ENCODE measurements at regions of chr1 and their contacts with region 1.

Region 1: DNA sequence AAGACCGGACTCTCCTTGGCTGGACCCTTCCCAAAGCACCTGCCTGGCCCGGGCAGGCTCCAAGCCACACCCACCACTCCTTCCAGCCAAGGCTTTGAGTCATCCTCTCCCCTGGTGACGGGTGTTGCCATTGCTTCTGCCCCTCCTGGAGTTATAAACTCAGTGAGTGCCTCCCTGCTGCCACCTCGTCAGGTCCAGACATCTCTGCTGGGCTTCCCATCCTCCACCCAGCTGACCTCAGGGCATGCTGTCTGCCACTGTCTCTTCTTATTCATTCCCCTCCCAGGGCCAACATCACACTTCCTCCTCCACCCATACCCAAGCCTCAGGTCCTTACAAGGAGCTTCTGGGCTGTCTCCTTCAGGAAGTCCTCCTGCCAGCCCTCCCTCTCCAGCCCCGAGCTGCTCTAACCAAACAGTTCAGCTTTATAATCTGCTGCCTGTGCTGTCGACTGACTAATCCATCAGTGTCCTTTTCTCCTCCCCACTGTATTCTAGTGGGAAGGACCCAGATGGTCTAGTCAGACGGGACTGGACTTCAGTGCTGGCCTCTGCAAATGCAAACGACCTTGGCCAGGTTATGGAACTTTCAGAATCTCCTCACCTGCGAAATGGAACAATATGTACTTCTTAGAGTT is 1.8 kb upstream of the CLSTN1 start:
- DNase-seq: peak; percentile 59 to 67
- H3K4me3 ChIP-seq: peak overlapping the region in 2 of 4 experiments; percentile 68 to 86; a peak in 5 of 8 replicates
- H3K27ac ChIP-seq: no peak overlapping the region
- H3K4me1 ChIP-seq: peaks cover 4 to 18% (median 12%) of the 10 kb centered on the region in 4 experiments
- H3K27me3 ChIP-seq: peaks cover 0 to 15% (median 14%) of the 10 kb centered on the region in 4 experiments; a peak in 6 of 7 replicates
- CTCF ChIP-seq: no peak
- EP300 ChIP-seq: no peak
- POLR2A ChIP-seq: no peak
- RAD21 ChIP-seq: no peak

Region 2: DNA sequence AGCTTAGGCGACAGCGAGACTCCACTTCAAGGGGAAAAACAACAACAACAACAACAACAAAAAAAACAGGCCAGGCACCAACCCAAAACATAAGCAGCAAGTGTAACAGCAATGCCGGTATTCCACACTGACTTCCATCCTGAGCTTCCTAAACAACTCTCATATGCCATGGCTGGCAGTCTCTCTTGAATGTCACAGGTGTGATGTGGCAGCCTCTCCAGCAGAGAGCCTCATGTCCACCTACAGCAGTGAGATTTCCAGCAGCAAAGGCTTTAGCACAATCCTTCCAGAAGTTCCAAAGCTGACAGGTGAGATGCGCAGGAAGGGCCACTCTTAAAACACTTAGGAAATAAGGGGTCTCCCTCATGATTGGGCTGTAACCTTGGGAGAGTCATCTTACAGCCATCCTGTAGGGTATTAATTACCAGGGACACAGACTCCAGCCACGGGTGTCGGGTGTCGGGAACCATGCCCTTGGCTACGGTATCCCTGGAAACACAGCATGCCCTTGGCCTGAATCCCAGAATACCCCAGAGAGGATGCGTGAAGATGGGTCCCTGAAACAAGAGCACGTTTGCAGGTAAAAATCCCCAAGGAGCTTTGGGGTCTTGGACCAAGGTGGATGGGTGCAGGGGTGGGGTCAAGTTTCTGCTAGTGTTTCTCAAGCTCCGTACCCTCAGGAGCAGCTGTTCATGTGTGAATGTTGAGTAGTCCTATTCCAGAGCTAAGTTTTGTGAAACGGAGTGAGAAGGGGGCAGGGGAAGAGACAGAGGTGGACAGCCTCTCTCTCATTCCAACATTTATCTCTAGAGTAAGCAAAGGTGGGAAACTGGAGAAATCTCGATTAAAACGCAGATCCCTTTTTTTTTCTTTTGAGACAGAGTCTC is 33.2 kb before region 1 on chr1:
- CTCF ChIA-PET with region 1: interaction called, 66 read pairs
- POLR2A ChIA-PET with region 1: interaction called, 4 read pairs
- DNase-seq: peak in 1 of 2 experiments; percentile 72
- H3K4me3 ChIP-seq: no peak overlapping the region
- H3K27ac ChIP-seq: no peak overlapping the region
- H3K4me1 ChIP-seq: peaks cover 3 to 23% (median 11%) of the 10 kb centered on the region in 4 experiments
- H3K27me3 ChIP-seq: no peaks in the 10 kb centered on the region
- CTCF ChIP-seq: peak; percentile 2 to 37 (median 5); a peak in 2 of 4 replicates
- EP300 ChIP-seq: no peak
- POLR2A ChIP-seq: no peak
- RAD21 ChIP-seq: peak in 1 of 2 experiments; percentile 27; a peak in 1 of 4 replicates

Region 3: DNA sequence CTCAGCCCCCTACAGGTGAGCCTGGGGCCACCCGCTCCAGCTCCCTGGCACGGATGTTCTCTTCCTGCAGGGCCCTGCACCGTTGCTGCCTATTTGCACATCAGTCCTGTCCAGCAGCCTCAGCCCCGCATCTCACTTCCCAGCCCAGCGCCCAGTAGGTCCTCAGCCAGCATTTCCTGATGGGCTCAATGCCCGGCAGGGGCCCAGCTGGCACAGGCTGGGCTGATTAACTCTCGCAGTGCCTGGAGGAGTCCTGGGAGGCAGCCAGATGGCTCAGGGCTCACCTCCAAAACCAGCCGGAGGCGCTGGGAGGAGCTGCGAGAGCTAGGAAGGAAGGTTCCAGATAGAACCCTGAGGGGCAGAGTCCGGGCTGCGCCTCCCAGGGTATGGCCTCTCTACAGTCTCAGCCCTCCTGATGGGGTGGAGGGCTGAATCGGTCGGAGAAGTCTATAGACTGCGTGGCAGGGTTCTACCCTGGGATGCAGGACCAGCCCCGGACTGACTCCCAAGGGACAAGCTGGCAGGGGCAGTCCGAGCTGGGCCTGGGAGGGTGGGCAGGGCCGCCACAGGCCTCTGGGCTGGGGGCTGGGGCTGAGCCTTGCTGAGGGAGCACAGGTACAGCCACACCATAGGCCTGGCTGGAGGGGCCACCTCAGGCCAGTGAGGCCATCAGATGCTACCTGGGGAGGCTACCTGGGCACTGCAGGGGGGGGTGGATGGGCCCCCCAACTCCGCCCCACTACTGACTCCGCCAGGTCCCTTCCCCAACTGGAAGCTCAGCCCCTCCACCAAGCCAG is 17.4 kb after region 1 on chr1:
- CTCF ChIA-PET with region 1: interaction called, 28 read pairs
- POLR2A ChIA-PET with region 1: interaction called, 3 read pairs
- DNase-seq: no peak
- H3K4me3 ChIP-seq: no peak overlapping the region
- H3K27ac ChIP-seq: no peak overlapping the region
- H3K4me1 ChIP-seq: peaks cover 0 to 22% (median 16%) of the 10 kb centered on the region in 4 experiments; a peak in 6 of 7 replicates
- H3K27me3 ChIP-seq: no peaks in the 10 kb centered on the region
- CTCF ChIP-seq: peak in 1 of 3 experiments; percentile 32; a peak in 1 of 4 replicates
- EP300 ChIP-seq: no peak
- POLR2A ChIP-seq: no peak
- RAD21 ChIP-seq: no peak

Region 4: DNA sequence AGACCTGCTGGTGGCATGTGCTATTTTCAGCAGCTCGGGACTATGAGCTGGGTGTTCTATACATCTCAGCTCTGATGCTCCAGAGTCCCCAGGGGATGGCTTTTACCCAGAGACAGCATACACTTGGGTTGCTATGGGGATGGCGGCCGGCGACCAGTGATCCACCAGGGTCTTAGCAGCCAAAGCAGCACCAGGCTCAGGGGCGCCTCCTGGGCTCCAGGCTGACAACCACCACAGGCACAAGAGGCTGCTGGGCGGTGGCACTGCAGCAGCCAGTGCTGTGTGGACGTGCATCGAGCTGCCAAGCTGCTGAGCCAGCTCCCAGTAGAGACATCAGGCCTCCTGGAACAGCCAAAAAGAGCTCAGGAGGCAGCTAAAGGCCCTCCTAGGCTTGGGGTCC is 35.8 kb after region 1 on chr1:
- CTCF ChIA-PET with region 1: interaction called, 56 read pairs
- POLR2A ChIA-PET with region 1: no interaction called
- DNase-seq: no peak
- H3K4me3 ChIP-seq: no peak overlapping the region
- H3K27ac ChIP-seq: no peak overlapping the region
- H3K4me1 ChIP-seq: peaks cover 0 to 9% (median 7%) of the 10 kb centered on the region in 4 experiments; a peak in 6 of 7 replicates
- H3K27me3 ChIP-seq: no peaks in the 10 kb centered on the region
- CTCF ChIP-seq: peak; percentile 47 to 53 (median 48)
- EP300 ChIP-seq: no peak
- POLR2A ChIP-seq: no peak
- RAD21 ChIP-seq: peak; percentile 45 to 64

Region 5: DNA sequence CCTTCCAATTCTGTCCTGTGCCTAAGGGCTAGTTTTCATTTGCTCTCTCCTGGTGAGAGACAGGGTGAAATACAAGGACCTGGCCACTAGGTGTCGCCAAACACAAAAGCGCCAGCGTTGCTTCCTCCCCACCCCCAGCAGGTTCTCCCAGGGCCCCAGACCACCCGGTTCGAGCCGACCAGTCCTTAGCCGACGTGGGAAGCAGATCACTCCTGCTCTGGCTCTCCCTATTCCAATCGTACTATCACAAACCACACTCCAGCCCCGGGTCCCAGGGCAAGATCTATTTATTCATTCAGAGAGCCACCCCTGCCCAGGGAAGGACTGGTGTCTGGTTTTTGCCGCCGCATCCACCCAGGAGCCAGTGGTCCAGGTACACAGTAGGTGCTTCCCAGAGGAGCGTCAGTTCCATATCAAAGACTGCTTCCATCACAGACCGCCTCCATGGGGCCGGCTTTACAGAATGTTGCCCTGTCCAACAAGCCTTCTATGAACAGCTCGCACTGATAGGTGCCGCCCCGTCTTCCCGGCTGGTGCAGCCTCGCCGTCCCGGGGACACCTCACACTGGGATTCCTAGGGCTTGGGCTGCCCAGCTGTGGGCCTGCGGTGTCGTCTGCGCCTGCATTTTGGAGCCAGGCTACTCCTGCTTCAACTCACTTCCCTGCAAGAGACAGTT is 49.5 kb after region 1 on chr1:
- CTCF ChIA-PET with region 1: interaction called, 24 read pairs
- POLR2A ChIA-PET with region 1: no interaction called
- DNase-seq: peak; percentile 61 to 92
- H3K4me3 ChIP-seq: peak overlapping the region in 2 of 4 experiments; percentile 29 to 45; a peak in 4 of 8 replicates
- H3K27ac ChIP-seq: no peak overlapping the region
- H3K4me1 ChIP-seq: peaks cover 0 to 8% (median 6%) of the 10 kb centered on the region in 4 experiments; a peak in 6 of 7 replicates
- H3K27me3 ChIP-seq: no peaks in the 10 kb centered on the region
- CTCF ChIP-seq: peak; percentile 77 to 96 (median 92)
- EP300 ChIP-seq: no peak; a peak in 1 of 3 replicates
- POLR2A ChIP-seq: no peak
- RAD21 ChIP-seq: peak; percentile 93 to 95

Region 6: GRCh38 chr1:10046356-10047085 is 220.9 kb after region 1 on chr1:
- CTCF ChIA-PET with region 1: no interaction called
- POLR2A ChIA-PET with region 1: no interaction called
- DNase-seq: no peak
- H3K4me3 ChIP-seq: no peak overlapping the region
- H3K27ac ChIP-seq: no peak overlapping the region
- H3K4me1 ChIP-seq: peaks cover 2 to 10% (median 8%) of the 10 kb centered on the region in 4 experiments; a peak in 3 of 7 replicates
- H3K27me3 ChIP-seq: no peaks in the 10 kb centered on the region
- CTCF ChIP-seq: no peak
- EP300 ChIP-seq: no peak
- POLR2A ChIP-seq: no peak
- RAD21 ChIP-seq: no peak